ENCODE measurements at regions of chr11 and their contacts with region 1.

Region 1: GRCh38 chr11:1572197-1573076 is at the start of gene DUSP8:
- DNase-seq: peak; percentile 92 to 99 (median 94)
- ATAC-seq: peak; percentile 55
- H3K4me3 ChIP-seq: peak within 1 kb of the TSS; percentile 56
- H3K4me3 Mint-ChIP-seq: peak within 1 kb of the TSS; percentile 88
- H3K27ac ChIP-seq: peak within 1 kb of the TSS; percentile 80 to 82
- H3K27ac Mint-ChIP-seq: peak within 1 kb of the TSS; percentile 89
- H3K4me1 ChIP-seq: peaks cover 45% of the 10 kb centered on the region
- H3K4me1 Mint-ChIP-seq: peaks cover 24% of the 10 kb centered on the region
- H3K27me3 ChIP-seq: no peaks in the 10 kb centered on the region
- H3K27me3 Mint-ChIP-seq: no peaks in the 10 kb centered on the region
- CTCF ChIP-seq: no peak
- total RNA-seq, gene DUSP8: 83.9 to 91.2 TPM

Region 2: DNA sequence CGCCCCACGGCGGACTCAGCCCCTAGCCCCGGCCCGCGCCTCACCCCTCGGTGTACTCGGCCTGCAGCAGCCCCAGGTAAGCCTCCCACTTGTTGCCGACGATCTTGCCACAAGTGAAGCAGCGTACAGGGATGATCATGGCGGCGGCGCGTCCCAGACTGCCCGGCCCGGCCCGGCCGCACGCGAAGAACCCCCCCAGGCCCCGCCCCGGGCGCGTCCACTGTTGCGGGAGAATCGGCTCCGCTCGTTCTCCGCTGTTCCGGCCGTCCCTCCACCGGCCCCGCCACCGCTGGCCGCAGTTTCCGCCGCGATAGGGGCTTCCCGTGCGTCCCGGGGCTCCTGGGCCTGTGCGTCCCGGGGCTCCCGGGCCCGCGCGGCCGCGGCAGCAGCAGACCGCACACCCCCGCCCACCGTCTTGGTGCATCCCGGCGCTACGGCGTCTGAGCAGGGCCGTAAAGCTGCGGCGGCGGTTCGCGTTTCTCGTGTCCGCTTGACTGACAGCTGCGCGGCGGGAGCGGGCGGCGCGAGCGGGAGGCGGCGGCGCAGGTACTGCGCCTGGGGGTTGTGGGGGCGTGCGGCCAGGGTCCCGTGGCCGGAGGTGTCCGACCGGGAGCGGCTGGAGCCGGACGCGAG is 730.0 kb before region 1 on chr11 and contains the starts of genes POLR2L and TSPAN4:
- CTCF ChIA-PET with region 1: no interaction called
- POLR2A ChIA-PET with region 1: no interaction called
- intact Hi-C with region 1: loop called in 1 of 2 experiments (anchors 10 kb)
- DNase-seq: peak; percentile 76 to 94 (median 86)
- ATAC-seq: peak; percentile 83
- H3K4me3 ChIP-seq: peak within 1 kb of the TSS; percentile 91
- H3K4me3 Mint-ChIP-seq: peak within 1 kb of the TSS; percentile 87
- H3K27ac ChIP-seq: peak within 1 kb of the TSS in 1 of 2 donors; percentile 50
- H3K27ac Mint-ChIP-seq: peak within 1 kb of the TSS; percentile 55
- H3K4me1 ChIP-seq: peaks cover 43% of the 10 kb centered on the region
- H3K4me1 Mint-ChIP-seq: peaks cover 6% of the 10 kb centered on the region
- H3K27me3 ChIP-seq: peaks cover 0 to 2% of the 10 kb centered on the region in 2 experiments
- H3K27me3 Mint-ChIP-seq: no peaks in the 10 kb centered on the region
- CTCF ChIP-seq: no peak
- total RNA-seq, gene POLR2L: 19.6 to 19.8 TPM
- total RNA-seq, gene TSPAN4: 1.6 to 2.0 TPM

Region 3: DNA sequence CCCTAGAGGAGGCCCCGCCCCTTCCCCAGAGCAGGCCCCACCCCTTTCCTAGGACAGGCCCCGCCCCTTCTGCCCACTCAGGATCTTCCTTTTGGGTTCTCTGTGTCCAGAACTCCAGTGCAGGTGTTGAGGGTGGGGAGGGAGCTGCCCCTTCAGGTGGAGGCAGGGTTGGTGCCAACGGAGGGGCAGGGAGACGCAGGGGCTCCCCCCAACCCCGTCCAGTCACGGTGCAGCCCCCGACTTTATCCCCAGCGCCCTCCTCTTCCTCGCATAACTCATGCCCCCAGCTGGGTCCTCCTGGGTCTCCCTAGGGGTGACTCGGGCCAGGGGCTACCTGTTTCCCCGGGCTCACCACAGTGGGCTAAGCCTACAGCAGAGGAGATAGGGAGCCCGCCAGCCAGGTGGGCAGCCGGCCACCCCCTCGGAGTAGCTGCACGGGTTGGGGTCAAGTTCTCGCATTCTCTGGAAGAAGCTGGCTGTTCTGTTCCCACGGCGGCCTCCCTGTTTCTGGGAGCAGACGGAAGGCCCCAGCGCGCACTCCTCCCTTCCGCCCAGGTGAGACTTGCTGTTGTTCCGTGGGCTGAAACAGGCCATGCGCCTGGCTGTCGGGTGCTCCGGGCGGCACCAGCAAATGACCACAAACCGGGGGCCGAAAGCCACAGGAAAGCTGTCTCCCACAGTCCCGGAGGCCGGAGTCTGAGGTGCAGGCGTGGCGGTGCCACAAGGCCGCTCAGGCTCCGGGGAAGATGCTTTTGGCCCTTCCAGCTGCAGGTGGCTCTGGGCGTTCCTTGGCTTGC is 458.8 kb before region 1 on chr11:
- CTCF ChIA-PET with region 1: no interaction called
- POLR2A ChIA-PET with region 1: no interaction called
- intact Hi-C with region 1: loop called in 1 of 2 experiments (anchors 2 kb)
- DNase-seq: no peak
- ATAC-seq: no peak
- H3K4me3 ChIP-seq: no peak overlapping the region
- H3K4me3 Mint-ChIP-seq: no peak overlapping the region
- H3K27ac ChIP-seq: no peak overlapping the region
- H3K27ac Mint-ChIP-seq: no peak overlapping the region
- H3K4me1 ChIP-seq: no peaks in the 10 kb centered on the region
- H3K4me1 Mint-ChIP-seq: no peaks in the 10 kb centered on the region
- H3K27me3 ChIP-seq: no peaks in the 10 kb centered on the region
- H3K27me3 Mint-ChIP-seq: no peaks in the 10 kb centered on the region
- CTCF ChIP-seq: no peak

Region 4: DNA sequence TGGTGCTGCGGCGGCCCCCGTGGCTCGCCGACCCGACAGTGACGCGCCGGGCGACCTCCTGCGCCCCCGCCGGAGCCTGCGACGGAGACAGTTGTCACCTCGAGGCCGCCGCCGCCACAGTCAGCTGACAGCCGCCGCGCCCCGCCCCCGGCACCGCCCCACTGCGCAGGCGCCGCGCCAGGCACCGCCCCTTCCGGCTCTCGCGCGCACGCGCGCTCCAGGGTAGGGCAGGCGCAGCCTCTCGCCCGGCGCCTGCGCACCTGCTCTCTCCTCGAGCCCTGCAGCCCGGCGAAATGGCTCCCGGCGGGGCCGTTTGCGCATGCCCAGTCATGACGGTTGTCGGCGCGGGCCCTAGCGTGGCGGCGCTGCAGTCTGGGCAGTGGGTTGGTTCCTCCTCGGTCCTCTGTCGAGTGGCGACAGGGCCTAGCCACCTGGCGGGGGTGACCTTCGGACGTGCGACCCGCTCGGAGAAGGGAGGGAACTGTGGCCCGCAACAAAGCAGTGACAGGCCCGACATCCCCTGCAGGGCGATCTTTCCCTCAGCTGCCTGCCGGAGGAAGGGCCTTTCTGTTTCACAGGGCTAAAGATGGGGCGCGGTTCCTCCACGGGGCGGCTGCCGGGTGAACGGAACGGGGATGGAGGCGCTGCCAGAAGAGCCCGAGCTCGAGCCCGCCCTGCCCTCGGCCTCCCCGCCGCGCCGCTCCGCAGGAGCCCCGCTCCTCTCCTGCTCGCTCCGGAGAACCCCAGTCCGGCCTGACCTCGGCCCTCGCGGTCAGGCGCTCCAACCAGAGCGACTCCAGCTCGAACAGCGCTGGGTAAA is 262.7 kb before region 1 on chr11 and contains the start of gene TOLLIP:
- CTCF ChIA-PET with region 1: interaction called, 5 read pairs
- POLR2A ChIA-PET with region 1: interaction called, 3 read pairs
- intact Hi-C with region 1: loop called in 1 of 2 experiments (anchors 5 kb)
- DNase-seq: peak; percentile 93 to 99 (median 98)
- ATAC-seq: peak; percentile 81
- H3K4me3 ChIP-seq: peak within 1 kb of the TSS; percentile 85
- H3K4me3 Mint-ChIP-seq: peak within 1 kb of the TSS; percentile 87
- H3K27ac ChIP-seq: peak within 1 kb of the TSS; percentile 82 to 90
- H3K27ac Mint-ChIP-seq: peak within 1 kb of the TSS; percentile 86
- H3K4me1 ChIP-seq: peaks cover 58% of the 10 kb centered on the region
- H3K4me1 Mint-ChIP-seq: peaks cover 49% of the 10 kb centered on the region
- H3K27me3 ChIP-seq: no peaks in the 10 kb centered on the region
- H3K27me3 Mint-ChIP-seq: no peaks in the 10 kb centered on the region
- CTCF ChIP-seq: peak; percentile 27
- total RNA-seq, gene TOLLIP: 38.9 to 41.0 TPM

Region 5: DNA sequence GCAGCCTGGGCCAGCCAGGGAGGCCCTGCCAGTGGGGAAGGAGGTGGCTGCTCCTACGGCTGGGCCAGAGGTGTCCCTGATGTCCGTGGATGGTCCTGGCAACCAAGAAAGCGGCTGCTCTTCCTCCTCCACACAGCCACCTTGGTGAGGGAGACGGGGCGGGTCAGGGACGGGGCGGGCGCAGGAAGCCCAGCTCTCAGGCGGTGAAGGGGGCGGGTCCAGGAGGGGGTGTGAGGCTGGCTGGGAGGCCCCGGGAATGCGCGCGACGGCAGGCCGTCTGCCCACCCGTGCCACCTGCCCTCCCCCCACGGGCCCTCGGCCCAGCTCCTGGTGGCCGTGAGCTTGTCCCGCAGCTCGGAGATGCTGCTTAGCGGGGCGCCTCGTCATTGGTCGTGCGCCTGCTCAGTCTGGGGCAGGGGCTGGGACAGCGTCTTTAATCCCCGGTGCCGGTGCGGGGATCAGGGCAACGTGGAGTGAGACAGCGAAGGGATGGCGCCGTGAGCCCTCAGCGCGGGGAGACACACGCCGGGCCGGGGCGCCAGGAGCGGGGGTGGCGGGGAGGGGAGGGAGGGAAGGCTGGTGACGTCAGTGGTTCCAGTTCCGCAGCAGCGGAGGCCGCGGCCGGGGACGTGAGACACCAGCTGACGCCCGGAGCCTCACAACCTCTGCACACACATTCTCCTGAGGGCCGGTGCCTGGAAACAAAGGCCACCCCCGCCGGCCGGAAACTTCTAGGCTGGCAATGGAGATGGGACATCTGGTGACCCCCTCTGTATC is 189.4 kb before region 1 on chr11:
- CTCF ChIA-PET with region 1: no interaction called
- POLR2A ChIA-PET with region 1: no interaction called
- intact Hi-C with region 1: loop called in 1 of 2 experiments (anchors 5 kb)
- DNase-seq: peak; percentile 54 to 92 (median 71)
- ATAC-seq: peak; percentile 77
- H3K4me3 ChIP-seq: peak overlapping the region; percentile 63
- H3K4me3 Mint-ChIP-seq: peak overlapping the region; percentile 87
- H3K27ac ChIP-seq: peak overlapping the region; percentile 74 to 85
- H3K27ac Mint-ChIP-seq: peak overlapping the region; percentile 78
- H3K4me1 ChIP-seq: peaks cover 20% of the 10 kb centered on the region
- H3K4me1 Mint-ChIP-seq: peaks cover 6% of the 10 kb centered on the region
- H3K27me3 ChIP-seq: no peaks in the 10 kb centered on the region
- H3K27me3 Mint-ChIP-seq: no peaks in the 10 kb centered on the region
- CTCF ChIP-seq: no peak

Region 6: GRCh38 chr11:1546536-1547400 is 25.7 kb before region 1 on chr11:
- CTCF ChIA-PET with region 1: interaction called, 83 read pairs
- POLR2A ChIA-PET with region 1: interaction called, 22 read pairs
- intact Hi-C with region 1: loop called (anchors 1 kb)
- DNase-seq: peak in 11 of 14 experiments; percentile 27 to 79 (median 45)
- ATAC-seq: peak; percentile 80
- H3K4me3 ChIP-seq: no peak overlapping the region
- H3K4me3 Mint-ChIP-seq: no peak overlapping the region
- H3K27ac ChIP-seq: no peak overlapping the region
- H3K27ac Mint-ChIP-seq: no peak overlapping the region
- H3K4me1 ChIP-seq: peaks cover 26% of the 10 kb centered on the region
- H3K4me1 Mint-ChIP-seq: peaks cover 4% of the 10 kb centered on the region
- H3K27me3 ChIP-seq: peaks cover 26 to 47% of the 10 kb centered on the region in 2 experiments
- H3K27me3 Mint-ChIP-seq: peaks cover 44% of the 10 kb centered on the region
- CTCF ChIP-seq: peak; percentile 70

Region 7: GRCh38 chr11:1628506-1629325 is 56.3 kb after region 1 on chr11:
- CTCF ChIA-PET with region 1: interaction called, 4 read pairs
- POLR2A ChIA-PET with region 1: no interaction called
- intact Hi-C with region 1: loop called in 1 of 2 experiments (anchors 1 kb)
- DNase-seq: peak; percentile 26 to 78 (median 56)
- ATAC-seq: peak; percentile 97
- H3K4me3 ChIP-seq: no peak overlapping the region
- H3K4me3 Mint-ChIP-seq: no peak overlapping the region
- H3K27ac ChIP-seq: no peak overlapping the region
- H3K27ac Mint-ChIP-seq: no peak overlapping the region
- H3K4me1 ChIP-seq: peaks cover 10% of the 10 kb centered on the region
- H3K4me1 Mint-ChIP-seq: peaks cover 10% of the 10 kb centered on the region
- H3K27me3 ChIP-seq: peaks cover 12% of the 10 kb centered on the region in 2 experiments
- H3K27me3 Mint-ChIP-seq: peaks cover 40% of the 10 kb centered on the region
- CTCF ChIP-seq: peak; percentile 84

Region 8: DNA sequence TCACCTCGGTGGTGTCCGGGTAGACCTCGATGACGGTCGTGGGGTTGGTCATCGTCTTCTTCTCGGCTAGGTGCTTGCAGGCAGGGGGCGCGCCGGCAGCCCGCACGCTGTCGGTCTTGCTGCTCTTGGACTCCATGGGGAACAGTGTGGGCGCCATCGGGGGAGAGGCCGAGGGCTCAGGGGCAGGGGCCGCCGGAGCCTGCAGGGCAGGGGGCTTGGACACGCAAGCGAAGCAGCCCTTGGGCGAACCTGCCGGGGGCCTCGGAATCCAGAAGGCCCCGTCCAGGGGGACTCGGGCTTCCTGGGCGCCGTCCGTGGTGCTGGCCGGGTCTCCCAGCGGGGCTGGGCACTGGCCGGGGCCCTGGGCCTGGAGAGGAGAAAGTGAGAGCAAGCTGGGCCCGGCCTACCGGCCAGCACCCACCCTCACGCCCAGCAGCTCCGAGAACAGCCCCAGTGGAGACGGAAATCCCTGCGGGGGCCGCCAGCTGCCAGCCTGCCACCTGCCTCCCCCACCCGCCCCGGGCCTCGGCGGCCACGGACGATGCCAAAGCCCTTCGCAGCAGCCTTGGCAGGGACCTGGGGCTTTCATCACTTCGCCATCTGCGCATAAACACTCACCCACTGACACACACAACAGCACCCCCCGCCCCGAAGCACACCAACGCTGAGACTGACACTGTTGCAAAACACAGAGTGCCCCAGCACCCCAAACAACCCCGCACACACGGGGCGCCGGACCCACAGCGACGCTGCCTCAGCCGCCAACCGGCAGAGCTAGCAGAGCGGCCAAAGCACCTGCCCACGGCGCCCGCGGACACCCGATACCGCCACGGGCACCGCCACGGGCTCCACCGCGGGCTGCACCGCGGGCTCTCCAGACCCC is 175.6 kb after region 1 on chr11:
- CTCF ChIA-PET with region 1: no interaction called
- POLR2A ChIA-PET with region 1: no interaction called
- intact Hi-C with region 1: no loop called
- DNase-seq: peak in 1 of 14 experiments; percentile 27
- ATAC-seq: no peak
- H3K4me3 ChIP-seq: no peak overlapping the region
- H3K4me3 Mint-ChIP-seq: no peak overlapping the region
- H3K27ac ChIP-seq: no peak overlapping the region
- H3K27ac Mint-ChIP-seq: no peak overlapping the region
- H3K4me1 ChIP-seq: peaks cover 34% of the 10 kb centered on the region
- H3K4me1 Mint-ChIP-seq: peaks cover 22% of the 10 kb centered on the region
- H3K27me3 ChIP-seq: peaks cover 13 to 19% of the 10 kb centered on the region in 2 experiments
- H3K27me3 Mint-ChIP-seq: peaks cover 14% of the 10 kb centered on the region
- CTCF ChIP-seq: no peak

Measured in CD4-positive, alpha-beta T cell (primary cell).